PC-9 (cell line): ENCODE measurements at regions of chr18 and their contacts with region 1.

Region 1: GRCh38 chr18:77000527-77000926 is 132.1 kb downstream of the MBP start:
- DNase-seq: peak in 1 of 2 experiments; percentile 31
- H3K4me3 ChIP-seq: no peak overlapping the region
- H3K27ac ChIP-seq: no peak overlapping the region
- H3K4me1 ChIP-seq: no peaks in the 10 kb centered on the region
- H3K27me3 ChIP-seq: no peaks in the 10 kb centered on the region
- CTCF ChIP-seq: peak; percentile 98

Region 2: GRCh38 chr18:76838182-76838581 is 162.3 kb before region 1 on chr18:
- CTCF ChIA-PET with region 1: interaction called, 11 read pairs
- POLR2A ChIA-PET with region 1: no interaction called
- intact Hi-C with region 1: no loop called
- DNase-seq: no peak
- H3K4me3 ChIP-seq: no peak overlapping the region
- H3K27ac ChIP-seq: no peak overlapping the region
- H3K4me1 ChIP-seq: peaks cover 19% of the 10 kb centered on the region
- H3K27me3 ChIP-seq: no peaks in the 10 kb centered on the region
- CTCF ChIP-seq: no peak

Region 3: DNA sequence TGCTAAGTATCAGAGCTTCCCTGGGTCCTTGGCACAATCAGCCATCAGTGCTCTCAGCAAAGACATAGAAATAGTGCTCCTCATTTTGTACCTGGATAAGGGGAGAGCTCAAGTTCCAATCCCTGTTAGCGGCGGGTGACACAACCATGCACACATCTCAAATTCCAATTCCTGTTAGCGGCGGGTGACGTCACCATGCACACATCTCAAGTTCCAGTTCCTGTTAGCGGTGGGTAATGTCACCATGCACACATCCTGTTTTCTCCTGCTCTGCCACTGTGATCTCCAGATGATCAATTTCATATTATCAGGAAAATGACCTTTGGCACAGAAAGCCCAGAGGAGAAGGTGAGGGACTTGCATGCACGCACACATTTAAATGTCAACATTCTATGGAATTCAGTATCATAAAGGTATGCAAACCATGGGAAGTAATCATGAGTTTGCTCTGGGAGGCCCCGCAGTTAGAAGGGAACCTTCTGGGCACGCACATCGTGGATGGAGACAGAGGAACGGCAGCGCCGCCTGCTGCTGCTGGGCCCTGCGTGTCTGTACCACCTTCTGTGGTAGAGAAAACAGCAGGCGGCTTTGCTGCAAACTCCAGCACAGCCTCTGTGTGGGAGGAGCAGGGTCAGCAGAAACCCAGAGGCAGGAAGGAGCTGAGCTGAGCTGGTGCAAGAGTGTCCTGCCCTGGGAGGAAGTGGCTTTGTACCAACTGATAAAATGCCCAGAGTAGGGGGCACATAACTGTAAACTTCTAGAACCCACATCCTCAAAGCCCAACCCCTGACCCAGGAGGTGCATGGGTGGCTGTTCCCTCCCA is 54.3 kb after region 1 on chr18:
- CTCF ChIA-PET with region 1: no interaction called
- POLR2A ChIA-PET with region 1: no interaction called
- intact Hi-C with region 1: loop called (anchors 5 kb)
- DNase-seq: peak; percentile 63 to 96
- H3K4me3 ChIP-seq: peak overlapping the region; percentile 38
- H3K27ac ChIP-seq: peak overlapping the region; percentile 98
- H3K4me1 ChIP-seq: peaks cover 42% of the 10 kb centered on the region
- H3K27me3 ChIP-seq: no peaks in the 10 kb centered on the region
- CTCF ChIP-seq: peak; percentile 52; the same call in 1 of the 2 replicates

Region 4: GRCh38 chr18:77088963-77089722 is 88.6 kb after region 1 on chr18:
- CTCF ChIA-PET with region 1: no interaction called
- POLR2A ChIA-PET with region 1: no interaction called
- intact Hi-C with region 1: loop called (anchors 1 kb)
- DNase-seq: peak; percentile 96 to 99
- H3K4me3 ChIP-seq: peak overlapping the region; percentile 25; the same call in 1 of the 2 replicates
- H3K27ac ChIP-seq: peak overlapping the region; percentile 95
- H3K4me1 ChIP-seq: peaks cover 71% of the 10 kb centered on the region
- H3K27me3 ChIP-seq: no peaks in the 10 kb centered on the region
- CTCF ChIP-seq: no peak

Region 5: GRCh38 chr18:77207540-77207939 is 207.0 kb after region 1 on chr18:
- CTCF ChIA-PET with region 1: no interaction called
- POLR2A ChIA-PET with region 1: interaction called, 6 read pairs
- intact Hi-C with region 1: loop called (anchors 1 kb)
- DNase-seq: no peak
- H3K4me3 ChIP-seq: no peak overlapping the region
- H3K27ac ChIP-seq: no peak overlapping the region
- H3K4me1 ChIP-seq: 0 out of 2 replicates have a peak, but pooled peaks cover 6% of the 10 kb centered on the region
- H3K27me3 ChIP-seq: no peaks in the 10 kb centered on the region
- CTCF ChIP-seq: peak; percentile 46